HEK293 (cell line): ENCODE measurements at regions of chr5 and their contacts with region 1.

Region 1: GRCh38 chr5:141992349-141992963 is 20.4 kb downstream of the GNPDA1 start:
- H3K4me3 ChIP-seq: no peak overlapping the region
- H3K27ac ChIP-seq: no peak overlapping the region
- H3K4me1 ChIP-seq: no peaks in the 10 kb centered on the region
- CTCF ChIP-seq: peak; percentile 49; the same call in 1 of the 2 replicates

Region 2: GRCh38 chr5:141968914-141969608 is 23.4 kb before region 1 on chr5 and contains the start of gene RNF14:
- CTCF ChIA-PET with region 1: interaction called, 42 read pairs
- POLR2A ChIA-PET with region 1: interaction called, 4 read pairs
- H3K4me3 ChIP-seq: peak within 1 kb of the TSS; percentile 93
- H3K27ac ChIP-seq: peak within 1 kb of the TSS; percentile 74
- H3K4me1 ChIP-seq: peaks cover 6% of the 10 kb centered on the region
- CTCF ChIP-seq: peak; percentile 91

Region 3: GRCh38 chr5:142103360-142103740 is 110.9 kb after region 1 on chr5:
- CTCF ChIA-PET with region 1: no interaction called
- POLR2A ChIA-PET with region 1: interaction called, 10 read pairs
- H3K4me3 ChIP-seq: no peak overlapping the region
- H3K27ac ChIP-seq: no peak overlapping the region
- H3K4me1 ChIP-seq: peaks cover 4% of the 10 kb centered on the region
- CTCF ChIP-seq: no peak

Region 4: DNA sequence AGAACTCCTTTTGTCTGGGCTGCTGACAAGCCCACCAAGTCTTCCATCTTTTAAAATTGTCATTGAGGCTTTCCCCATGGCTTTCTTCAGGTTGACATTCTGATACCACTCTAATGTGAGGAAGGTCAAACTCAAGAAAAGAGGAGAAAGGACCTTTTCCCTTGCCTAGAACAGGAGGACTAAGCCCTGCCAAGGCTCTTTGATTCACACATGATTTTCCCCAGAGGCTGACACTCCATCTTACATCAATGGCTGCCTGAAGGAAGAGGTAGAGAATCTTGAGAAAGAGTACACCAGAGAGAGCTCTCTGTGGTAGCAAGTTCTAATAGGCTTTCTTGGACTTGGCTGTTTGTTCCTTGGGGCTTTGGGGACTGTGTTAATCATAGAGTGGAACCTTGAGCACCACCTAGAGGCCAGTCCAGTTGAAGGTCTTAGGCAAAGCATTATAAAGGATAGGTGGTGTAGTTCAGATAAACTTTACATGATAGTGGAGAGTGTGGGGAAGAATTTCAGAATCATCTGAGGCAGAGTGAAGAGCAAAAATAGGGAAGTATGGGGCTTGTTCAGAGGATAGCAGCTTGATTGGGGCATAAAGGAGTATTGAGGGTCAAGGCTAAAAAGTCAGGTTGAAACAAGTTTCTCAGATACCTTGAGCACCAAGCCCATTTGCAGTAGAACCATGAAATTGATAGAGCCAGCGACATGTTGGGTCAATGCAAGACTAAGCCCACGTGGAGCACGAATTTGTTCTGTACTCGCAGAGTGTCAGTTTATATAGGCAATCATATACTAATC is 152.8 kb after region 1 on chr5:
- CTCF ChIA-PET with region 1: interaction called, 89 read pairs
- POLR2A ChIA-PET with region 1: interaction called, 4 read pairs
- H3K4me3 ChIP-seq: no peak overlapping the region
- H3K27ac ChIP-seq: no peak overlapping the region
- H3K4me1 ChIP-seq: no peaks in the 10 kb centered on the region
- CTCF ChIP-seq: no peak